ENCODE measurements at regions of chr12 and their contacts with region 1.

Region 1: DNA sequence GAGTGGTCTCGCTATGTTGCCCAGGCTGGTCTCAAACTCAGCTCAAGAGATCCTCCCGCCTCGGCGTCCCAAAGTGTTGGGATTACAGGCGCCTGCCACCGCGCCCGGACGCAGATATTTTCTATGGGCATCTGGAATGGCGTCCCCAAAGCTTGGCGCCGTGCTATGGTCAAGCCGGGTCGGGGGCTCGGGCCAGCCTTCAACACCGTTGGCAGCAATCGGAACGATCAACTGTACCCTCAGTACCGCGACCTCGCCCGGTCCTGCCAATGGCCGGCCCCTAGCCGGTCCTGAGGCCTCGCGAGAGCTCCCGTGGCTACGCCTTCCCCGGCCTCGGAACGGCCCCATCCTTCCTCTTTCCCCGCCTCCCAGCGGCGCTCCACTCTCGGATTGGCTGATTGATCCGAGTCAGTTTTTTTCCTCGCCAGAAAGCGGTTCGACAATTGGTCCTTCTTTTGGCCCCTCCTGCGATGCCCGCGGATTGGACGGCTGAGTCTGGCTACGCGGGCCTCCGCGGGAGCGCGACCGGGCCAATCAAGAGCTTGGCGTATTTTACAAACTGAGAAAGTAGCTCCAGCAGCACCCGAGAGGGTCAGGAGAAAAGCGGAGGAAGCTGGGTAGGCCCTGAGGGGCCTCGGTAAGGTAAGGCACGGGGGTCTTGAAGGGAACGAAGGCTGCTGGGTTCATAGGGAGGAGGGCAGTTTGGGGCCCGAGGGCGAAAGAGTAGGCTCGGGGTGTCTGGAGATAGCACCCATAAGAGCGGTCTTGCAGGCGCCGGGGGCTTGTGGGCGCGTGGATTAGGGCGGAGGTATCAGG is at the start of gene TROAP:
- DNase-seq: peak; percentile 97 to 99 (median 97)
- H3K4me3 ChIP-seq: peak within 1 kb of the TSS; percentile 54 to 77
- H3K4me3 Mint-ChIP-seq: peak within 1 kb of the TSS; percentile 92 to 99 (median 96)
- H3K27ac ChIP-seq: peak within 1 kb of the TSS; percentile 51
- H3K27ac Mint-ChIP-seq: peak within 1 kb of the TSS; percentile 75 to 96 (median 91)
- H3K4me1 ChIP-seq: peaks cover 14% of the 10 kb centered on the region
- H3K4me1 Mint-ChIP-seq: peaks cover 14 to 24% (median 15%) of the 10 kb centered on the region in 4 donors
- H3K27me3 ChIP-seq: no peaks in the 10 kb centered on the region
- H3K27me3 Mint-ChIP-seq: no peaks in the 10 kb centered on the region
- total RNA-seq, gene TROAP: 0.26 to 0.80 TPM

Region 2: GRCh38 chr12:49264738-49265515 is 58.0 kb before region 1 on chr12 and contains the start of gene TUBA1C:
- CTCF ChIA-PET with region 1: no interaction called
- POLR2A ChIA-PET with region 1: interaction called, 20 read pairs
- intact Hi-C with region 1: no loop called
- DNase-seq: peak; percentile 80 to 84 (median 82)
- H3K4me3 ChIP-seq: peak within 1 kb of the TSS; percentile 65 to 96
- H3K4me3 Mint-ChIP-seq: peak within 1 kb of the TSS; percentile 90 to 99 (median 96)
- H3K27ac ChIP-seq: peak within 1 kb of the TSS; percentile 74
- H3K27ac Mint-ChIP-seq: peak within 1 kb of the TSS; percentile 92 to 98 (median 94)
- H3K4me1 ChIP-seq: peaks cover 36% of the 10 kb centered on the region
- H3K4me1 Mint-ChIP-seq: peaks cover 8 to 42% (median 23%) of the 10 kb centered on the region in 4 donors
- H3K27me3 ChIP-seq: no peaks in the 10 kb centered on the region
- H3K27me3 Mint-ChIP-seq: no peaks in the 10 kb centered on the region
- total RNA-seq, gene TUBA1C: 50.6 to 51.2 TPM

Region 3: DNA sequence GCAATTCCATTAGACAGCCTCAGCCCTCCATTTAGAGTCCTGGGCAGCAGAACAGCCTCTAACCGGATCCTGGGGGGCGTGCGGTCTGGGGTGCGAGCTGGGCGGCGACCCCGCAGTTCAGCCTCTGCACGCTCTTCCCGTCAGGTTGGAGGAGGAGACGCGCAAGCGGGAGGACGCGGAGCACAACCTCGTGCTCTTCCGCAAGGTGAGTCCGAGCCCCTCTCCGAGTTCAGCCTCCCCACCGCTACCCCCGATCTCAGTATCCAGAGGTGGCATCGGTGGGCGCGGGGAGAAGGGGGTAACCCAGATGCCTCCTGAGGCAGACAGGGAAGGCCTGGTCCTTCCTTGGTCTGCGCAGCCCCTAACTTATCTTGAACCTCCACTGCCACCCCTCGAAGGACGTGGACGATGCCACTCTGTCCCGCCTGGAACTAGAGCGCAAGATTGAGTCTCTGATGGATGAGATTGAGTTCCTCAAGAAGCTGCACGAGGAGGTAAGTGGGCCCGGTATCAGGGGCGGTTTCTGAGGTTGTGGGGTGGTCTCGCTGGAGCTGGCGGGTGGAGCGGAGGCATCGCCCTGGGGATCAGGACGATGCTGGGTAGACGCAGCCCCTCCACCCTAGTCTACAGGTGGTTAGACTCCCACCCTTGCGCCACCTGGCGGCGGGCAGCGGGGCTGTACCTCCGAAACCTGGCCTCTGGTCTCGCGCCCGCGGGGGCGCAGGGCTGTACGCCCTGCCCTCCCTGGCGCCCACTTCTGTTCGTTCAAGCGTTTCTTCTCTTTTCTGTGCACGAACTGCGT is 26.7 kb before region 1 on chr12:
- CTCF ChIA-PET with region 1: interaction called, 24 read pairs
- POLR2A ChIA-PET with region 1: interaction called, 5 read pairs
- intact Hi-C with region 1: no loop called
- DNase-seq: peak; percentile 53 to 64 (median 61)
- H3K4me3 ChIP-seq: peak overlapping the region in 1 of 2 donors; percentile 36
- H3K4me3 Mint-ChIP-seq: peak overlapping the region; percentile 62 to 79 (median 74)
- H3K27ac ChIP-seq: no peak overlapping the region
- H3K27ac Mint-ChIP-seq: peak overlapping the region in 1 of 7 donors; percentile 53
- H3K4me1 ChIP-seq: peaks cover 20% of the 10 kb centered on the region
- H3K4me1 Mint-ChIP-seq: peaks cover 5 to 28% (median 17%) of the 10 kb centered on the region in 4 donors
- H3K27me3 ChIP-seq: peaks cover 32% of the 10 kb centered on the region
- H3K27me3 Mint-ChIP-seq: peaks cover 34 to 42% of the 10 kb centered on the region in 2 donors

Region 4: DNA sequence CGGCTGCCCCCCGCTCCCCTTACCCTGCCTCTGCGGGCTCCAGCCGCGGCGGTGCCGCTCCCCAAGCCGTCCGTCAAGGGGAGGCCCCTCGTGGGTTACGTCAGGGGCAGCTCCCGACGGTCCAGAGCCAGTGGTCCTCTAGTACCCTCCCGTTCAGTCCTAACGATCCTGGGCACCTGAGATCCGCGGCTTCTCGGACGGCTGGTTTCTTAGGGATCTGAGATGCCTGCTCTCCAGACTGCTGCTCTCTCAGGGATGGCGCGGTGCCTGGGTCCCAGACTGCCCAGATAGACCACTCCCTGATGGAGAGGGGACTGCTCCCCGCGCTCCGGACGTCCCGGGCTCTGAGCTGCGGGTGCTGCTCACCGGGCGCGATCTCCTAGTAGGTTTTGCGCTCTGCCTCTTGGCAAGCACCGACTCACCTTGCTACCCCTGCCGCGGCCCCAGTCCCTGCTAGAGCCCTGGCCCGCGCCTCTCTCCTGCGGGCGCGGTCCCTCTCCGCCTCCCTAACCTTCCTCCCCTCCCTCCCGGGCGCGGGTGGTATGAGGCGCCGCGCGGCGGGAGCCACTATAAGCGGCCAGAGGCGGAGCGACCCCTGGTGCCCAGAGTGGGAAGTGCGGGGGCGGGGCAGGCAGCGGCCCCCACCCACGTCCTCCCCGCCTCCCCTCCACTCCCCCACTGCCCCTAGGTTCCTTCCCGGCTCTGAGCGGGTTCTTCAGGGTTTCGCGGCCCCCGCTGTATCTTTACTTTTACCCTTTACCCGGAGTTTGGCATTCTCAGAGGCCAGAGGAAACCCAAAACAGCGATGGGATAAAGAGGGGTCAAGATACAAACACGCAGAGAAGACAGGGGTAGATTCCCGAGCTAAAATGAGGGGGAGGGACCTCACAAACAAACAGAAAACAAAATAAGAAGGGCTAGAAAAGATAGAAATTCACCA is 14.0 kb after region 1 on chr12 and contains the start of gene C1QL4:
- CTCF ChIA-PET with region 1: interaction called, 21 read pairs
- POLR2A ChIA-PET with region 1: interaction called, 12 read pairs
- intact Hi-C with region 1: loop called (anchors 1 kb)
- DNase-seq: peak; percentile 81 to 87 (median 81)
- H3K4me3 ChIP-seq: peak within 1 kb of the TSS in 1 of 2 donors; percentile 43
- H3K4me3 Mint-ChIP-seq: peak within 1 kb of the TSS; percentile 13 to 86 (median 70)
- H3K27ac ChIP-seq: no peak within 1 kb of the TSS
- H3K27ac Mint-ChIP-seq: peak within 1 kb of the TSS in 2 of 7 donors; percentile 24 to 52
- H3K4me1 ChIP-seq: peaks cover 22% of the 10 kb centered on the region
- H3K4me1 Mint-ChIP-seq: peaks cover 16 to 41% (median 23%) of the 10 kb centered on the region in 4 donors
- H3K27me3 ChIP-seq: peaks cover 37% of the 10 kb centered on the region
- H3K27me3 Mint-ChIP-seq: peaks cover 41 to 63% of the 10 kb centered on the region in 2 donors
- total RNA-seq, gene C1QL4: not detected

Measured in CD4-positive, alpha-beta memory T cell (primary cell).